Motor neuron (in vitro differentiated cells): ENCODE measurements at regions of chr1 and their contacts with region 1.

Region 1: GRCh38 chr1:205961405-205961804 is 18.1 kb upstream of the SLC26A9 start:
- ATAC-seq: peak in 7 of 8 experiments; percentile 16 to 75 (median 55)
- H3K4me3 ChIP-seq: no peak overlapping the region
- H3K27ac ChIP-seq: peak overlapping the region in 1 of 2 donors; percentile 41
- H3K4me1 ChIP-seq: peaks cover 13 to 21% of the 10 kb centered on the region in 2 donors

Region 2: DNA sequence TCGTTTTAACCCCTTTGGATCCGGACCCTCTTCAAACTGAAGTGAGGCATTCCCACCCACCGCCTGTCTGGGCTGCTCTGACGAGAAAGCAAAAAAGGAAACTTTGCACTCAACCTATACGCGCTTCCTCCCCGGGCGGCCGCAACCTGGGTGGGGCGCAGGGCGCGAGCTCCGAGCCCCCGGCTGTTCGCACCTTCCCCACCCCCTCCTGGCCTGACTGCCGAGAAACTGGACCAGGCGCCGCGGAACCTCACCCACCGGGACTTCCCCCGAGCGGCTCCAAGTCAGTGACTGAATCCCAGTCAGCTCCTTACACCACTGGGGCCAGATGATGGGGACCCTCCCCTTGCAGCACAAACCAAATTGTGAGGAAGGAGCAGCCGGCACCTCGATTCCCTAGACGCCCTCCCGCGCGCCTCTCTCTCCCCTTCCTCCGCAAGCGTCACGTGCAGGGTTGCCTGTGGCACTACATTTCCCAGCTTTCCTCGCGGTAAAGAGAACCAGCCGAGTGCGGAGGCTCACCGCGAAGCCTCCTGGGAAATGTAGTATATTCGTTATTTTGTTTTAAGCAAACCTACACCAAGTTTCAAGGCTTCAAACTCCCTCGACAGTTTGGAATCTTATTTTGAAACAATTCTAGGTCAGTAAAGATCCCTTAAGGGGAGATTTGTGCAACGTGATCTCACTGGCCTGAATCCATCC is 186.2 kb before region 1 on chr1 and contains the start of gene RAB29:
- in situ Hi-C with region 1: loop called in 2 of 9 experiments (anchors 25 kb)
- ATAC-seq: peak; percentile 88 to 99 (median 98)
- H3K4me3 ChIP-seq: peak within 1 kb of the TSS; percentile 57 to 63 (median 58)
- H3K27ac ChIP-seq: no peak within 1 kb of the TSS
- H3K4me1 ChIP-seq: peaks cover 0 to 4% of the 10 kb centered on the region in 2 donors
- total RNA-seq, gene RAB29: 1.6 to 26.2 (median 6.6) TPM

Region 3: DNA sequence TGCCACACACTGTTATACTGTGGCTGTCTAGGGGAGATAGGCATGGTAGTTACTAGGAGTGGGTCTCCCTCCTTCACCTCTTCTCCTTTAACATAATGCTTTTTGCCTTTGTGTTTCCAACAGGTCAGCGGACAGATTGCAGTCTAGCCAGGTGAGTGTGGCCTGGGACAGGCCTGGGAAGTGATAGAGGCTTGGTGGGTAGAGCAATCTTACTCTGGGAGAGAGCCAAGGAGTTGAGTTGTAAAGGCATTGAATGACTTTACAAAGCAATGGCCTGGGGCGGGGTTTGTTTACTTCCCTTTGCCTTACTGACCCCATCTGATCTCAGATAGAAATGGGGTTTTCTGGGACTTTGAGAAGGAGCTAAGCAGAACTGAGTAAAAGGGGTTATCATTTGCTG is 457.8 kb after region 1 on chr1:
- in situ Hi-C with region 1: no loop called
- ATAC-seq: peak in 1 of 8 experiments; percentile 14
- H3K4me3 ChIP-seq: no peak overlapping the region
- H3K27ac ChIP-seq: no peak overlapping the region
- H3K4me1 ChIP-seq: peaks cover 25 to 32% of the 10 kb centered on the region in 2 donors